ENCODE measurements at regions of chr7 and their contacts with region 1.

Region 1: DNA sequence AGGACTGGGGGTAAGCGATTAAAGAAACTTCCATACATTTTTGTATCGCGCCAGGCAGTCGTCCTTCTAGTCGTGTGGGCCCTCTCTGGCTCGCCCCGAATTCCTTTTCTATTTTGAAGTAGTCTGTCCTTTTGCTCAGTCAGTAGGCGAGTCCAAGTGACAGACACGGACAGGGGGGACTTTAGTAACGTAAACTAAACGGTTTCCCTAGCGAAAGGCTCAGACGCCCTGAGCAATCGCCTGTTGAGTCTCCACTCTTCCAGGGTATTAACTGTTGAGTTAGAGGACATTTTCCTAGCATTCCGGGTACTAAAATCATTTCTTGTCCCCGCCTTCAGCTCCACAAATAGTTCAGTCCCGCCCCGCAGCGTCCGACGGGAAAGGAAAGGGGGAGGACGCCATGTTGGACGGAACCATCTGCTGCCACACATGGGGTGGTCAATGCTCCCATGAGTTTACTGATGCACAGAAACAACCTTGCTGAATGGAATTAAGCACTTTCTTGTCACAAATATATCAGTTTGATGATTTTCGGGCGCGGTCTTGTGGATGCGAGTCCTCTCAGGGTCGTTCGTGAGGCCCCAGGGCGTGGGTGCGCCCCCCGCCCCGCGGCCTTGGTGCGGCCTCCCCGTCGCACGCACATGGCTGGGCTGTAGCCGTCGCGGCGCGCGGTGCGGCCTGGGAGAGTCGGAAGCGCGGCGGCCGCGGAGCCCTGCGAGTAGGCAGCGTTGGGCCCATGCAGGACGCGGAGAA is at the start of gene EIF3B:
- DNase-seq: peak; percentile 96
- H3K4me3 Mint-ChIP-seq: peak within 1 kb of the TSS; percentile 96
- H3K27ac Mint-ChIP-seq: peak within 1 kb of the TSS; percentile 98
- H3K4me1 Mint-ChIP-seq: peaks cover 30% of the 10 kb centered on the region
- H3K27me3 Mint-ChIP-seq: no peaks in the 10 kb centered on the region
- total RNA-seq, gene EIF3B: 284 TPM in 2 replicates

Region 2: GRCh38 chr7:1579481-1580421 is 774.6 kb before region 1 on chr7:
- intact Hi-C with region 1: loop called (anchors 2 kb)
- DNase-seq: peak; percentile 92
- H3K4me3 Mint-ChIP-seq: no peak overlapping the region
- H3K27ac Mint-ChIP-seq: no peak overlapping the region
- H3K4me1 Mint-ChIP-seq: peaks cover 7% of the 10 kb centered on the region
- H3K27me3 Mint-ChIP-seq: no peaks in the 10 kb centered on the region

Region 3: GRCh38 chr7:1664711-1665548 is 689.4 kb before region 1 on chr7:
- intact Hi-C with region 1: loop called (anchors 2 kb)
- DNase-seq: peak; percentile 85
- H3K4me3 Mint-ChIP-seq: no peak overlapping the region
- H3K27ac Mint-ChIP-seq: no peak overlapping the region
- H3K4me1 Mint-ChIP-seq: peaks cover 8% of the 10 kb centered on the region
- H3K27me3 Mint-ChIP-seq: peaks cover 44% of the 10 kb centered on the region

Region 4: DNA sequence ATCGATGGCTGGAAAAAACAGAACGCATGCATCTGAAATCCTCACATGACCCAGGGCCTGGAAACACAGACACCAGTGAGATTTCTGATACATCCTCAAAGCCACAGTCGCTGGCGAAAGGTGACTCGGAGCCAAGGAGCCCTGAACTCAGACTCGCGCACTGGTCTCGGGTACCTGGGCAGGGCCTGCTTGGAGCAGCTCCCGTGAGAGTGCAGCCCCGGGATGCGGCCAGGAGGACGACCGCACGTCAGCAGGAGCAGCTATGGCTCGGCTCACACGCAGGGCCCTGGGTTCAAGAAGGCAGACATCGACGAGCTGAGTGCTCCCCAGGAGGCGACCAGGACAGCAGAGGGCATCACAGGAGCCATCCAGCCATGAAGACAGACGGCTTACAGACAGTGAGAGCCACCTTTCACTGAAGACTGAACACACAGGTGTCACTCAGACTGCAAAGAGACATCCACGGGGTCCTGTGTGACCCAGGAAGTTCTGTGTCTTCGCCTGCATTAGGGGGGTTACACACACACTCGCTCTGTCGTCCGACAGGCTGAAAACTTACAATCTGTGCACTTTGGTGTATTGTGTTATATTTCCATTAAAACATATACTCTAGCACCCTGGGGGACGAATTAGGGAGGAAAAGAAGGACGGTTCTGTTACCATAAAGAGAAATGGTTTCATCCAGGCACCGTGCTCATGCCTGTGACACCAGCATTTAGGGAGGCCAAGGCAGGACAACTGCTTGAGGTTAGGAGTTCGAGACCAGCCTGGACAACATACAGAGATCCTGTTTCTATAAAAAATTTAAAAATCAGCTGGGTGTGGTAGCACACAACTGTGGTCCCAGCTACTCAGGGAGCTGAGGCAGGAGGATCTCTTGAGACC is 349.3 kb before region 1 on chr7:
- intact Hi-C with region 1: no loop called
- DNase-seq: no peak
- H3K4me3 Mint-ChIP-seq: no peak overlapping the region
- H3K27ac Mint-ChIP-seq: no peak overlapping the region
- H3K4me1 Mint-ChIP-seq: peaks cover 2% of the 10 kb centered on the region
- H3K27me3 Mint-ChIP-seq: no peaks in the 10 kb centered on the region

Region 5: GRCh38 chr7:2087744-2088143 is 266.6 kb before region 1 on chr7:
- intact Hi-C with region 1: no loop called
- DNase-seq: no peak
- H3K4me3 Mint-ChIP-seq: no peak overlapping the region
- H3K27ac Mint-ChIP-seq: no peak overlapping the region
- H3K4me1 Mint-ChIP-seq: peaks cover 17% of the 10 kb centered on the region
- H3K27me3 Mint-ChIP-seq: no peaks in the 10 kb centered on the region

Region 6: DNA sequence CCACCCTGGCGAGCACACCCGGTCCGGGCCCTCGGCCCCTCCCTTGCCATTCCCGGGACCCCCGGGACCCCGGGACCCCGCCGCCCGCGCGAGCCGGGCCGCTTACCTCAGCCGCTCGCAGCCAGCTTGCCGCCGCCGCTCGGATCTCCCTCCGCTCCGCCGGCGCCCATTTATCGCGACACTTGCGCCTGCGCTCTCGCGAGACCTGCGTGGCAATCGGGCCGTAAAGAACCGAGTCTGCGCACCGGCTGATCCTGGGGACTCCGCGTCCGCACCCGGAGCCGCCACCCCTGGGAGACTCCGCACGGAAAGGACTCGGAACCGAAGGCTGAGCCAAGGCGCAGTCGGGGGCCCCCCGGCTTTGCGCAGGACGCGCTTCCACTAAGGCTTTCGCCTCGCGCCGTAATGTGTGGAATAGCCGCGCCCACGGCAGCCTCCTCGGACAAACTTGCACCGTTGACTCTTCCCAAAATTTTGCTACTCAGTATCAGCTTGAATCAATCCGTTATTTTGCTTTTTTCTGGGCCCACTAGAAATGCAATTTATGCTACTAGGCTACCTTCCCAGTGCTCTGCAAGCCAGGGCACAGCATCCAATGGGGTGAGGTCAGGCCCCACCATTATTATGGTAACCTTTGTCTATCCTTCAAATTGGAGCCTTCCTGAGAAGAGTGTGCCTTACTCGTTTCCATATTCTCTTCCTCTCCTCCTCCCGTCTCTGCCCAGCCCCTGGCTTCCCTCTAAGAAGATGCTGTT is 121.4 kb before region 1 on chr7 and contains the start of gene MAD1L1:
- intact Hi-C with region 1: loop called (anchors 5 kb)
- DNase-seq: peak; percentile 98
- H3K4me3 Mint-ChIP-seq: peak within 1 kb of the TSS; percentile 88
- H3K27ac Mint-ChIP-seq: peak within 1 kb of the TSS; percentile 87
- H3K4me1 Mint-ChIP-seq: peaks cover 20% of the 10 kb centered on the region
- H3K27me3 Mint-ChIP-seq: no peaks in the 10 kb centered on the region
- total RNA-seq, gene MAD1L1: 48.3 and 54.0 TPM in 2 replicates

Region 7: DNA sequence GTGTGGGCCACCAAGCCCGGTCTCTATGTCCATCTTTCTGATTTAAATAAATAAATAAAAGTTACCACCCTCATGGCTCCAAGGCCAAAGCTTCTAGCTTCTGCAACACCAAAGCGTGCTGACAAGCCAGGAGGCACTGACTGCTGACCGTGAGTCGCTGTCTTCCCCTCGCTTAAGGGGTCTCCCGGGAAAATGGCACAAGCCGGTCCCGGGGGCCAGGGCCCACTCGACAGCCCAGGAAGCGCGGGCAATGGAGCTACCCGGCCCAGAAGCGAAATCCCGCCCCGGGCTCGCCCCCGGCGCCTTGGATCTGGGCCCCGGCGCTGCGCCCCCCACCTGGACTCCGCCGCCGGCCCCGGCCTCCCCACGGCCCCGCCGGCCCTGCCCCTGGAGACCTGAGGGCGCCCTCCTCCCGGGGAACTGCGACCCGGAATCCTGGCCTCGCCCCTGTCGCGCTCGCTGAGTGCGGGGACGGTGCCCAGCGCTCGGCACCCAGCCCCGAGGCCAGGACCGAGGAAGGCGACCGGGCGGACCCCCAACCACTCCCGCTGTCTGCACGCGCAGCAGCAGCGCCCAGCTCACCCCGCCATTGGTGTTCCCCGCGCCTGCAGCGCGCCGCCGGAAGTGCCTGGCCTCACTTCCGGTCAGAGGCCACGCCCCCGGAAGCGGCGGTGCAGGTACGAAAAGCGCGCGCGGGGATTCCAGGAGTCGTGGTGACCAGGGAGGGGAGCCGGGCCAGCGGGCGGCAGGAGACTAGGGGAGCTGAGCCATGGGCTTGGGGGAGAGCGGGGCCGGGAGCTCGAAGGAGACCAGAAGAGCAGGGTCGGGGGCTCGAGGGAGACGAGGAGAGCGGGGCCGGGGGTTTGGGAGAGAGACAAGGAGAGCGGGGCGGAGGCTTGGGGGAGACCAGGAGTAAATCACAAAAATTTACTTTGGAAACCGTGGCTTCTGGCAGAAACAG is 112.5 kb before region 1 on chr7 and contains the starts of genes MRM2 and NUDT1:
- intact Hi-C with region 1: loop called (anchors 1 kb)
- DNase-seq: peak; percentile 95
- H3K4me3 Mint-ChIP-seq: peak within 1 kb of the TSS; percentile 96
- H3K27ac Mint-ChIP-seq: peak within 1 kb of the TSS; percentile 89
- H3K4me1 Mint-ChIP-seq: peaks cover 11% of the 10 kb centered on the region
- H3K27me3 Mint-ChIP-seq: no peaks in the 10 kb centered on the region
- total RNA-seq, gene MRM2: 47.2 and 47.9 TPM in 2 replicates
- total RNA-seq, gene NUDT1: 69.9 and 81.6 TPM in 2 replicates

Region 8: GRCh38 chr7:2289111-2289586 is 65.2 kb before region 1 on chr7:
- intact Hi-C with region 1: no loop called
- DNase-seq: no peak
- H3K4me3 Mint-ChIP-seq: no peak overlapping the region
- H3K27ac Mint-ChIP-seq: no peak overlapping the region
- H3K4me1 Mint-ChIP-seq: no peaks in the 10 kb centered on the region
- H3K27me3 Mint-ChIP-seq: no peaks in the 10 kb centered on the region

Region 9: DNA sequence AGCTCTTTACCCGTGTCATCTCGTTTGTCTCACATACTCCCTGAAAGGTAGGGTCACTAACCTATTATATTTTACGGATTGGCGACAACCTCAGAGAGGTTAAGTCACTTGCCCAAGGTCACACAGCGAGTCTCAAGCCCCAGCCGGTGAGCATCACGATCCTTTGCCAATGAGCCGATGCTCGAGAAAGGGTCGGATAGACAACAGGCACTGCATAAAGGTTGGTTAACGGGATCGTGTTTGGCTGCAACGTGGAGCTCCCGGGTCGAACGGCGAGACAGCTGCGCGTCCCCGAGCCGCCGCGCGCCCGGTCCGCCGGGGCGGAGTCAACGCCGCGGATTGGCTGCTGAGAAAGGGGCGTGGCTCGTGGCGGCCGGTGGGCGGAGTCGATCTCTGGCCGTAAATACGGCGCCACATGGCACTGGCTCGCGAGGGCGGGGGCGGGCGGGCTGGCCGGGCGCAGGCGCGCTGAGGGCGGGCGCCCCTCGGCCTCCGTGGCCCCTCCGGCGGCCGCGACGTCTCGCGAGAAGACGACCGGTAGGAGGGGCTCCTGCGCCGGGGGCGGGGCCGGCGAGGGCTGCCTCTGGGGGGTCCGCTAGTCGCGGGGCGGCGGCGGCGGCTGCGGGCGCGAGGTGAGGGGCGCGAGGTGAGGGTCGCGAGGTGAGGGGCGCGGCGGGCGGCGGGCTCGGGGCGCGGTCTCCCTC is 48.8 kb after region 1 on chr7 and contains the start of gene CHST12:
- intact Hi-C with region 1: loop called (anchors 5 kb)
- DNase-seq: peak; percentile 99
- H3K4me3 Mint-ChIP-seq: peak within 1 kb of the TSS; percentile 91
- H3K27ac Mint-ChIP-seq: peak within 1 kb of the TSS; percentile 85
- H3K4me1 Mint-ChIP-seq: peaks cover 47% of the 10 kb centered on the region
- H3K27me3 Mint-ChIP-seq: no peaks in the 10 kb centered on the region
- total RNA-seq, gene CHST12: 5.8 and 6.4 TPM in 2 replicates

Region 10: GRCh38 chr7:2555121-2556052 is 201.0 kb after region 1 on chr7 and contains the start of gene BRAT1:
- intact Hi-C with region 1: loop called (anchors 5 kb)
- DNase-seq: peak; percentile 97
- H3K4me3 Mint-ChIP-seq: peak within 1 kb of the TSS; percentile 90
- H3K27ac Mint-ChIP-seq: peak within 1 kb of the TSS; percentile 92
- H3K4me1 Mint-ChIP-seq: peaks cover 29% of the 10 kb centered on the region
- H3K27me3 Mint-ChIP-seq: no peaks in the 10 kb centered on the region
- total RNA-seq, gene BRAT1: 39.5 and 40.9 TPM in 2 replicates

Region 11: GRCh38 chr7:3668743-3669142 is 1314.4 kb after region 1 on chr7:
- intact Hi-C with region 1: no loop called
- DNase-seq: no peak
- H3K4me3 Mint-ChIP-seq: no peak overlapping the region
- H3K27ac Mint-ChIP-seq: no peak overlapping the region
- H3K4me1 Mint-ChIP-seq: no peaks in the 10 kb centered on the region
- H3K27me3 Mint-ChIP-seq: peaks cover 3% of the 10 kb centered on the region